Left cardiac atrium (tissue), 4 donors: ENCODE measurements at regions of chr9 and their contacts with region 1.

Region 1: DNA sequence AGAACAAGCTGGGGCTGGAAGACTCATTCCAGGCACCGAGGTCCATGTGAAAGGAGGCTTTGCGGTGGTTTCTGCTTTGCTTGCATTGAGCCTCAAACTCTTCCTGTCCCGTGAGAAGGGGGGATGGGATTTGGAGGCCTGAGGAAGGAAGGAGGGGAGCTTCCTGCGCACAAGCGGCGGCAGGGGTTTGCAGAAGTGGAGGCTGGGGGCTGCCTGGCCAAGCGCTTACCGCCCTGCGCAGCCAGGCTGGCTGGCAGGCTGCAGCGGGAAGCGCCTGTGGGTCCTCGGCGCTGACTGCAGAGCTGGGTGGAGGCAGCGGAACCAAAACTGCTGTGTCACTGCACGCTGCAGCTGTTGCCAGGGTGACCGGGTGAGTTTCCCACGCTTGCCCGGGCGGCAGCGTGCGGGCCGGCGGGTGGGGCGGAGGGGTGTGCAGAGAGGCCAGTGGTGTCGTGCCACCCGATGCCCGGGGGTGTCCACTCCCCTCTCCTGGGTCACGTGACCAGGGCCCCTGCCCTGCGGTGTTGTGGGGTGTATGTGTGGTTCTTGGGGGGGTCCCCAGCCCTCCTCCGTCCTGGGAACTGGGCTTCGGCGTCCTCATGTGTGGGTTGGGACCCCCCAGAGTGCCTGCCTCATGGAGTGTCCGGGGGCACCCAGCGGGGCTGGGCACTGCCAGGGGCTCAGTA is 81.0 kb downstream of the RXRA start:
- DNase-seq: peak; percentile 94
- ATAC-seq: peak; percentile 73 to 80

Region 2: GRCh38 chr9:133992780-133993634 is 414.3 kb before region 1 on chr9:
- intact Hi-C with region 1: no loop called
- DNase-seq: peak; percentile 88
- ATAC-seq: peak; percentile 84 to 91

Region 3: DNA sequence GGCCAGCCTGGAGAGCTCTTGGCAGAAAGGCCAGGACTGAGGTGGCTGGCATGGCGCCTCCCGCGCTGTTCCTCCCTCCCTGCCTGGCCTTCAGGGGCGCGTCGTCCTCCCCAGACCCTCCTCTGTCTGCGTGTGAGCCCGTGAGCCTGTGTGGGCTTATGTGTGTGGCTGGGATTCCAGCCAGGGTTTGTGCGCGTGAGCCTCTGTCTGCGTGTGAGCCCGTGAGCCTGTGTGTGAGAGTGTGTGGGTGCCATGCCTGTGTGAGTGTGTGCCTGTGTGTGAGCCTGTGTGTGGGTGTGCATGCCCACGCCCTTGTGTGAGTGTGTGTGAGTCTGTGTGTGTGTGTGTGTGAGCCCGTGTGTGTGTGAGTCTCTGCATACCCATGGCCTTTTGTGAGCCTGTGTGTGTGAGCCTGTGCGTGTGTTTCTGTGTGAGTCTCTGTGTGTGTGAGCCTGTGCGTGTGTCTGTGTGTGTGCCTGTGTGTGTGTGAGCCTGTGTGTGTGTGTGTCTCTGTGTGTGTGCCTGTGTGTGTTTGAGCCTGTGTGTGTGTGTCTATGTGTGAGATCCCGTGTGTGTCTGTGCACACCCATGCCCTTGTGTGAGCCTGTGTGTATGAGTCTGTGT is 68.0 kb before region 1 on chr9:
- intact Hi-C with region 1: loop called in 1 of 2 experiments (anchors 10 kb)
- DNase-seq: no peak
- ATAC-seq: peak in 1 of 2 donors; percentile 6

Region 4: GRCh38 chr9:134475011-134475790 is 67.9 kb after region 1 on chr9:
- intact Hi-C with region 1: no loop called
- DNase-seq: peak; percentile 85
- ATAC-seq: peak; percentile 66 to 75

Region 5: DNA sequence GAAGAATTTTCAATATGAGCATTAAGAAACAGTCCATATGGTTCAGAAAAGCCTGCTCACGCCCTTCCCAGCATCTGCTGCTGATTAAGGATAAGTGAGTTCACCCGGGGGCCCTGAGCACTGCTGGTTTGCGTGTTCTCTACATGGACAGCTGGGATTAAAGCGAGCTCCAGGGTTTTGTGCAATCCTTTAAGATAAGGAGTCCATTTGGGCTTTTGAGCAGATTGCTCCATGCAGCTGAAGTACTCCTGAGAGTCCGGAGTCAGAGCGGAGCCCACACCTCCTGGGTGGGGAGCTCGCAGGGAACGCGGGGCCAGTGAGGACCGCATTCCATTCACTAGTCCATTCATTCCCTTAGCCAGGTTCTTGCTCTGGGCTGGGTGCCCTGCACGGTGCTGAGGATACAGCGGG is 85.0 kb after region 1 on chr9:
- intact Hi-C with region 1: no loop called
- DNase-seq: peak; percentile 72
- ATAC-seq: peak; percentile 84 to 88